Activated T-helper 1 cell treated with anti-CD3 and anti-CD28 coated beads, Interleukin-12 subunit alpha, Interleukin-12 subunit beta, Interleukin-2, Interleukin-4 antibody, amounts not matched to agents 30 ng/mL and 10 ng/mL and 1 ng/mL, durations not matched to agents 14 hours and 24 hours and 36 hours (primary cell): ENCODE measurements at regions of chr6 and their contacts with region 1.

Region 1: GRCh38 chr6:21305893-21306332 is 287.6 kb upstream of the SOX4 start:
- DNase-seq: no peak
- H3K4me3 Mint-ChIP-seq: no peak overlapping the region
- H3K27ac Mint-ChIP-seq: no peak overlapping the region
- H3K4me1 Mint-ChIP-seq: no peaks in the 10 kb centered on the region
- H3K27me3 Mint-ChIP-seq: peaks cover 11% of the 10 kb centered on the region

Region 2: GRCh38 chr6:21367649-21368149 is 61.8 kb after region 1 on chr6:
- intact Hi-C with region 1: loop called (anchors 2 kb)
- DNase-seq: no peak
- H3K4me3 Mint-ChIP-seq: no peak overlapping the region
- H3K27ac Mint-ChIP-seq: no peak overlapping the region
- H3K4me1 Mint-ChIP-seq: no peaks in the 10 kb centered on the region
- H3K27me3 Mint-ChIP-seq: peaks cover 4% of the 10 kb centered on the region